ENCODE measurements at regions of chr12 and their contacts with region 1.

Region 1: DNA sequence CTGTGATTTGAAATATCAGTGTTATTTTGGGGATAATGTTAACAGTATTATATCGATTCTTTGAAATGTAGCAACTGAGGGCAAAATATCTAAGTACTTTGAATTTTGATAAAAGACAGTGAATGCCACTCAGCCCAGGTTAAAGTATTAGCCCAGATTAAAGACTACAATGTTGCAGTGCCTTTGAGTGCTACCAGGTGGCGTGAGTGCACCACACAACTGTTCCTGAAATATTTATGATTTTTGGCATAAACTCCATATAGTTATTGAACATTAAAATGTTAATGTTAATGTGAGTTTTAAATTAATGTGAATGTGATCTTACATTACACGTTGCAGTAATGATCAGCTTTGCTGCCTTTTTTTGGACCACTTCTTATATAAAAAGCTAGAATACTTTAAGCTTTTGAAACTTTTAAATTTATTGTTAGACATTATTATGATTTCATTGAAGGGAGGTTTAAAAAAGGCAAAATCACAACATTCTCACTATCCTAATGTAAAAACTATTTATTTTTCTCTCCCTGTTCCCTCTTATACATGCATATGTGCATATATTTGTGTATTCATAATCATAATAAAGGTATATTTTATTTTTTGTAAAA is 22.5 kb downstream of the MRPS35 start:
- DNase-seq: no peak
- ATAC-seq: peak; percentile 46 to 48
- H3K4me3 ChIP-seq: no peak overlapping the region
- H3K27ac ChIP-seq: no peak overlapping the region
- H3K4me1 ChIP-seq: no peaks in the 10 kb centered on the region
- H3K27me3 ChIP-seq: no peaks in the 10 kb centered on the region
- CTCF ChIP-seq: peak; percentile 73

Region 2: DNA sequence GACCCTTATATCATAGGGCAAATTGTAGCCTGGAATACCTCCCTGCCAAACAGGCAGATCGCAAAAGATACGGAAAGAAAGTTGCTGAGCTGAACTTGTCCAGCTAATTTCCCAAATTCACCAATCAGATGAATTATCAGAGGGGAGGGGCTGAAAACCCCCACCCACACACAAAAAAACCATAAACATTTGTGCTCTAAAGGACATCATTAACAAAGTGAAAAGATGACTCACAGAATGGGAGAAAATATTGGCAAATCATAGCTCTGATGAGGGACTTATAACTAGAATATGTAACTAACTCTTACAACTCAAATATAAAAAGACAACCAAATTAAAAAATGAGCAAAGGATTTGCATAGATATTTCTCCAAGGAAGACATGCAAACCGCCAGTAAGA is 203.0 kb after region 1 on chr12:
- intact Hi-C with region 1: loop called (anchors 10 kb)
- DNase-seq: no peak
- ATAC-seq: no peak
- H3K4me3 ChIP-seq: no peak overlapping the region
- H3K27ac ChIP-seq: no peak overlapping the region
- H3K4me1 ChIP-seq: no peaks in the 10 kb centered on the region
- H3K27me3 ChIP-seq: no peaks in the 10 kb centered on the region
- CTCF ChIP-seq: no peak